A549 (cell line): ENCODE measurements at regions of chr14 and their contacts with region 1.

Region 1: DNA sequence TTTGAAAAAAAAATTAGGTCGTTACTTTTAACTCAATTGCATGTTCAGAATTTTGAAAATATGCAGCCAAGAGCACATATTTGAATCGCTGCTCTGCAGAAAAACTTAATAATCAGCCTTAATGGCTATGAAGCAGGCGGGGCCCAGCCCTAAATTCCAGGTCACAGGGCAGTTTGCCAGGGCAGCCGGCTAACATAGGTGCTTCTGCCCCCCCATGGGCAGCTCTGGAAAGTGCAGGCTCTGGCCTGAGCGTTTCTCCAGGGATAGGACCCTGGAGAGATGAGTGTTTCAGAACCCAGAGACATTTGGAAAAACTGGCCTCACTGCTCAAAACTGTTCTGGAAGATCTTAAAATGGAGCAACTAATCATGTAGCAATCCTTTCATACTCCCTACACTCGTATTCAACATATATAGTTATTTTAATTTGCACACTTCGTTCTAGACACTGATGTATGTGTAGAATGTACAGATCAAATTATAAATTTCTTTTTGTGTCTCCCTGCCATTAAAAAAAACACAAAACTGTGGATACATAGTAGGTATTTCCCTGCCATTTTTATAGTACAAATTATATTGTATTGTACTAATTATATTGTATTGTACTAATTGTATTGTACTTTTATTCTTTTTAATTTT is 26.0 kb upstream of the PTGR2 start:
- DNase-seq: peak; percentile 83 to 89
- ATAC-seq: peak; percentile 93 to 94
- H3K4me3 ChIP-seq: no peak overlapping the region
- H3K27ac ChIP-seq: no peak overlapping the region
- H3K4me1 ChIP-seq: peaks cover 10% of the 10 kb centered on the region
- CTCF ChIP-seq: peak; percentile 83
- EP300 ChIP-seq: no peak
- POLR2A ChIP-seq: no peak
- RAD21 ChIP-seq: peak; percentile 90 to 93

Region 2: GRCh38 chr14:73741386-73741875 is 84.2 kb before region 1 on chr14:
- CTCF ChIA-PET with region 1: interaction called, 10 read pairs
- POLR2A ChIA-PET with region 1: no interaction called
- DNase-seq: peak in 1 of 2 experiments; percentile 61
- ATAC-seq: peak; percentile 33 to 72
- H3K4me3 ChIP-seq: peak overlapping the region; percentile 19
- H3K27ac ChIP-seq: peak overlapping the region; percentile 81 to 86
- H3K4me1 ChIP-seq: peaks cover 69% of the 10 kb centered on the region
- CTCF ChIP-seq: no peak
- EP300 ChIP-seq: no peak
- POLR2A ChIP-seq: no peak
- RAD21 ChIP-seq: no peak

Region 3: DNA sequence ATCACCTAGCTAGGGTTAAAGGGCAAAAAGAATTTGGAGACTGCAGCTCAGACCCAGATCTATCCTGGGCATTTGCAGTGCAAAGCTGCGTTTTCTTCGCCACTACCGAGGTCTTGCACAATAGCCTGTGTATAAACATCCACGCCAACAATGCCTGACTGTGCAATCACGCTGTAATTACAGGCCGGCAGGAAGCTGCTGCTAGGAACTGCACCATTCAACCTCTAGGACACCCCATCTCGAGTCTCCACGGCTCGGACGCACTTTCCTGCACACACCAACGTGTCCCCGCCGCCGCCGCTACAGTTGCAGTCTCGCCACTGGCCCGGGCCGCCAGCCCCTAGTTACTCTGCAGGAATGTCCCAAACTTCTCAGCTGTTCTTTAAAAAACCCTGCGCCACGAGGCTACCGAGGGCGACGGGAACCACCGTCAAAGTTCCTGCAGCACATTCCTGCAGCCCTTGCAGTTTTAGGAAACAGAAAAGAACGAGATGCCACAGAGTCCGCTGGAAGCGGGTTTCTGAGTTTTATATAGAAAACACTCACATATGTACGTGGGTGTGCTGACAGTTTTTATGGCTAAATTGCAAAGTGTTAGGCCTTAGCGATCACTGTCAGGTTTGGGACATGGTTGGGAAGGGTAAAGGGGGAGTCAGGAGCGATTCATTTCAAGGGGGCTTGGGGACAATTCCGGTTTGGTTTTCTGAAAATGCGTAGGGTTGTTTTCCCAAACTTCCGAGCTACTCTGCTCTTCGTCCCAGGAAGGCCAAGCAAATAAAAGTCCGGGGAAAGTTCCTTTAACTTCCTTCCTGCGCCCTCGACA is 39.6 kb before region 1 on chr14:
- CTCF ChIA-PET with region 1: interaction called, 38 read pairs
- POLR2A ChIA-PET with region 1: interaction called, 4 read pairs
- DNase-seq: peak; percentile 60 to 88
- ATAC-seq: peak; percentile 86 to 90
- H3K4me3 ChIP-seq: peak overlapping the region; percentile 79
- H3K27ac ChIP-seq: peak overlapping the region; percentile 95 to 100
- H3K4me1 ChIP-seq: peaks cover 33% of the 10 kb centered on the region
- CTCF ChIP-seq: no peak
- EP300 ChIP-seq: no peak
- POLR2A ChIP-seq: peak; percentile 36; the same call in 1 of the 2 replicates
- RAD21 ChIP-seq: 0 out of 5 replicates have a peak, but pooled peaks of 1 of the 2 experiments have one; percentile 23

Region 4: GRCh38 chr14:73795972-73796371 is 29.7 kb before region 1 on chr14:
- CTCF ChIA-PET with region 1: interaction called, 17 read pairs
- POLR2A ChIA-PET with region 1: no interaction called
- DNase-seq: peak; percentile 49 to 78
- ATAC-seq: peak; percentile 43 to 76; a peak in 4 of 6 replicates
- H3K4me3 ChIP-seq: no peak overlapping the region
- H3K27ac ChIP-seq: peak overlapping the region; percentile 7 to 57; a peak in 4 of 6 replicates
- H3K4me1 ChIP-seq: peaks cover 36% of the 10 kb centered on the region
- CTCF ChIP-seq: no peak
- EP300 ChIP-seq: no peak
- POLR2A ChIP-seq: no peak
- RAD21 ChIP-seq: no peak

Region 5: GRCh38 chr14:73802431-73803188 is 23.1 kb before region 1 on chr14:
- CTCF ChIA-PET with region 1: interaction called, 17 read pairs
- POLR2A ChIA-PET with region 1: no interaction called
- DNase-seq: peak in 1 of 2 experiments; percentile 49
- ATAC-seq: peak; percentile 84 to 86
- H3K4me3 ChIP-seq: no peak overlapping the region
- H3K27ac ChIP-seq: peak overlapping the region in 1 of 2 experiments; percentile 34; a peak in 2 of 6 replicates
- H3K4me1 ChIP-seq: peaks cover under 1% of the 10 kb centered on the region; the same call in 1 of the 3 replicates
- CTCF ChIP-seq: no peak
- EP300 ChIP-seq: no peak
- POLR2A ChIP-seq: no peak
- RAD21 ChIP-seq: no peak

Region 6: DNA sequence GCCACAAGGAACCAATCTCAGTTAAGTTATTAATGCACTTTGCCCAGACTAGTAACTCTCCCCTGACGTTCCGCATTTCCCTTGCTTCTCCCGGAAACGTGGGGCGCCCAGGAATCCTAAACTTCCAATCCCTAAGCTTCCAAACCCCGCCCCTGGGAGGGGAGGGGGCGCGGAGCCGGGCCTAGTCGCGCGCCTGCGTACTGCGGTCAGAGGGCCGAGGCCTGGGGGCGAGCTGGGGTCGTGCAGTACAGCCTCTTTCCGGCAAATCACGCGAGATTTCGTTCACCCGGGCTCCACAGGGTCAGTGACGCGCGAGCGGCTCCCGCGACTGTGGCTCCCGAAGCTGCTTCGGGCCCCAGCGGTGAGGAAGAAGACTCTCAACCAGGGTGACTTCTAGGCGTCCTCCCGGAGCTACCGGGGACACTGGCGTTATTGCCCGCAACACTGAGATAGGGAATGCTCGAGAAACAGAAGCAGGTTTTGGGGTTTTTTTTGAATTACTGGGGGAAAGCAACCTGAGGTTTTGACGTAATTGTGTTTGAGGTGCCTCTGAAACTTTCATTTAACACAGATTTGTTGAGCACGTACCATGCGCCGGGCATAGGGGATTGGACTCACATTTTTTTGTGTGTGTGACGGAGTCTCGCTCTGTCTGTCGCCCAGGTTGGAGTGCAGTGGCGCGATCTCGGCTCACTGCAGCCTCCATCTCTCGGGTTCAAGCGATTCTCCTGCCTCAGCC is 26.1 kb after region 1 on chr14 and contains the start of gene PTGR2:
- CTCF ChIA-PET with region 1: interaction called, 4 read pairs
- POLR2A ChIA-PET with region 1: interaction called, 16 read pairs
- DNase-seq: peak; percentile 98 to 99
- ATAC-seq: peak; percentile 92 to 94
- H3K4me3 ChIP-seq: peak within 1 kb of the TSS; percentile 74
- H3K27ac ChIP-seq: peak within 1 kb of the TSS; percentile 93 to 94
- H3K4me1 ChIP-seq: peaks cover 27% of the 10 kb centered on the region
- CTCF ChIP-seq: no peak
- EP300 ChIP-seq: no peak
- POLR2A ChIP-seq: peak; percentile 83
- RAD21 ChIP-seq: 0 out of 5 replicates have a peak, but pooled peaks of 1 of the 2 experiments have one; percentile 9
- polyA plus RNA-seq, gene PTGR2: 17.7 and 30.5 TPM in 2 replicates